ENCODE measurements at regions of chr5 and their contacts with region 1.

Region 1: DNA sequence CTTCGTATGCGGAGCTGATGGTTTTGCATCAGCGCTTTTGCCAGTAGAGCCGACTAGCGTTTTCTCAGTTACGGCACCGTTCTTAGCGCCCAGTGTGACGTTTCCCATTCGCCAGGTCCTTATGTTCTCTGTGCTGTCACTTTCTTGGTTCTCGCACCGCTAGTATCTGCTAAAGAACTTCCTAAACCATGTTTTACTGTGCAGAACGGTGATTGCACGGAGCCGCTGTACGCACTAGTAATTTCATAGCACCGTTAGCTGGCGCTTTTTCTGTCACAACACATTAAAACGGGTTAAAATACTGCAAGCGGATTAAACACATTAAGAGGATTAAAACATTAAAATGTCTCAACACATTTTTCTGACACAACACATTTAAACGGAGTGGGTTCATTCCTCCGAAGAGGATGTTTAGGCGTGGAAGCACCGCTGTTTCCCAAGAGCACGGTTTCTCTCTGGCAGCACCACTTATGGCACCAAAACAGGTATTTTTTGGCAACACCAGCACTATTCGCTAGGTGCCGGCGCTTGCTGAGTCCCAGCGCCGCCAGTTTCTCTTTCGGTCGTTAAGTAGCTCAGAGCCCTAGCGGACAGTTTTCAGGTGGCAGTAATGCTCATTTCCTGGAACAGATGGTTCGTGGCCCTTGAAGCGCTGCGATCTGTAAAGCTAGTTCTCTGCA is 20.4 kb downstream of the ANXA2R start:
- DNase-seq: peak; percentile 80 to 83
- H3K4me3 ChIP-seq: peak overlapping the region; percentile 50
- H3K27ac ChIP-seq: no peak overlapping the region
- H3K4me1 ChIP-seq: no peaks in the 10 kb centered on the region
- H3K27me3 ChIP-seq: no peaks in the 10 kb centered on the region
- CTCF ChIP-seq: peak; percentile 61; the same call in 1 of the 2 replicates

Region 2: GRCh38 chr5:43040287-43041098 is 20.7 kb after region 1 on chr5 and contains the start of gene ANXA2R:
- CTCF ChIA-PET with region 1: interaction called, 5 read pairs
- POLR2A ChIA-PET with region 1: interaction called, 15 read pairs
- intact Hi-C with region 1: loop called (anchors 1 kb)
- DNase-seq: peak; percentile 94 to 97
- H3K4me3 ChIP-seq: peak within 1 kb of the TSS; percentile 76
- H3K27ac ChIP-seq: peak within 1 kb of the TSS; percentile 60
- H3K4me1 ChIP-seq: peaks cover 1% of the 10 kb centered on the region; the same call in 1 of the 2 replicates
- H3K27me3 ChIP-seq: no peaks in the 10 kb centered on the region
- CTCF ChIP-seq: peak; percentile 99
- total RNA-seq, gene ANXA2R: 3.6 and 6.3 TPM in 2 replicates

Measured in PC-9 (cell line).